Breast epithelium (tissue), 4 donors: ENCODE measurements at regions of chr3 and their contacts with region 1.

Region 1: GRCh38 chr3:20668411-20668810 is 482.4 kb upstream of the SGO1 start:
- DNase-seq: no peak
- H3K4me3 ChIP-seq: no peak overlapping the region
- H3K27ac ChIP-seq: no peak overlapping the region
- H3K4me1 ChIP-seq: no peaks in the 10 kb centered on the region
- H3K27me3 ChIP-seq: no peaks in the 10 kb centered on the region
- CTCF ChIP-seq: no peak
- POLR2A ChIP-seq: no peak

Region 2: DNA sequence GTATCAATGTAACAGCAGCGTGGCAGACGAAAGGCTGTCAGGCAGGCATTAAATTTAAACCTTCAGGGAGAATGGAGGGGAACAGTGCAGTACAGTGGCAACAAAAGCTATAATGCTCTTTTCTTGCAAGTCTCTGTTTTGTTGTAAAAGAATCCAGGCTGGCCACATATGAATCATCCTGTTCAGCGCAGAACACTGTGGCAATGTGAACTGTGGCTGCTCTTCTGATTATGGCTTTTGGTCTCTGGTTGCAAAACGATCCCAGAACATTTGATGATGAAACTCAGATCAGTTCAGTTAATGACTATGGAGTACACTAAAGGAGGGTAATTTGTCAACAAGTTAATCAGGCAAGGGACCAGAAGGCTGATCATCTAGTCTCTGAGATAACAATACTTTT is 262.7 kb before region 1 on chr3:
- intact Hi-C with region 1: no loop called
- DNase-seq: no peak
- H3K4me3 ChIP-seq: no peak overlapping the region
- H3K27ac ChIP-seq: no peak overlapping the region
- H3K4me1 ChIP-seq: no peaks in the 10 kb centered on the region
- H3K27me3 ChIP-seq: no peaks in the 10 kb centered on the region
- CTCF ChIP-seq: no peak
- POLR2A ChIP-seq: no peak

Region 3: DNA sequence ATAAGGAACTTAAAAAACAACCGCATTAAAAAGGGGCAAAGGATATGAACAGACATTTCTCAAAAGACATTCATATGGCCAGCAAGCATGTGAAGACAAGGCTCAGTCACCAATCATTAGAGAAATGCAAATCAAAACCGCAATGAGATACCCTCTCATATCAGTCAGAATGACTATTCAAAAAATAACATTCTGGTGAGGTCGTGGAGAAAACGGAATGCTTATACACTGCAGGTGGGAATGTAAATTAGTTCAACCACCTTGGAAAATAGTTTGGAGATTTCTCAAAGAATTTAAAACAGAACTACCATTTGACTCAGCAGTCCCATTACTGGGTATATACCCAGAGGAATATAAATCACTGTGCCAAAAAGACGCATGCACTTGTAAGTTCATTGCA is 14.2 kb after region 1 on chr3:
- intact Hi-C with region 1: loop called (anchors 1 kb)
- DNase-seq: no peak
- H3K4me3 ChIP-seq: no peak overlapping the region
- H3K27ac ChIP-seq: no peak overlapping the region
- H3K4me1 ChIP-seq: no peaks in the 10 kb centered on the region
- H3K27me3 ChIP-seq: no peaks in the 10 kb centered on the region
- CTCF ChIP-seq: no peak
- POLR2A ChIP-seq: no peak